ENCODE measurements at regions of chr5 and their contacts with region 1.

Region 1: DNA sequence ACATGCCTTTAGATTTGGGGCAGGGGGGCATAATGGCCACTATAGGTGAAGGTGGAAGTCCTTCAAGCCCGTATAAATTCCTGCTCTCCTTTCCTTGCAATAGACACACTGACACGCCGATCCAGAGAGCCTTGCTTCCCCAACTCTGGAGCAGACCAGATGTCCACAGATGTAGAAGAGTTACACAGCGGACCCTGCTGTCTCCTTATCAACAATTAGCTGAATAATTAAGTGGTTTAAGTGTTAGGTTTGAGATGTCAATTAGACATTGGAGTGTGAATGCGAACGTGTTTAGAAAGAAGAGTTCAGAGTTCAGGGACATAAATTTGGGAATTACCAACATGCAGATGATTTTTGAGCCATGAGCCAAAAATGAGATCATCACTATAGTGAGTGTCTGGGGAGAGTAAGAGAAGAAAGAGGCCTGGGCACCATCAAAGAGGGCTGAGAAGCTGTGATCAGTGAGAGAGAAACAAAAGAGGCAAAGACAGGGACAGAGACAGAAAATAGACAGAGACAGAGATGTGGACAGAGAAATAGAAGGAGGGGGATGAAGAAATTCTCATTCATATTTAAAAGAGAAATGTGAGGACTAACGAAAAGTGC is 734.4 kb upstream of the ADAMTS16 start:
- DNase-seq: no peak
- ATAC-seq: no peak
- H3K4me3 ChIP-seq: no peak overlapping the region
- H3K27ac ChIP-seq: no peak overlapping the region
- H3K4me1 ChIP-seq: no peaks in the 10 kb centered on the region
- H3K27me3 ChIP-seq: peaks cover 0 to 3% (median 0%) of the 10 kb centered on the region in 3 donors
- CTCF ChIP-seq: no peak

Region 2: GRCh38 chr5:4189317-4189716 is 216.4 kb before region 1 on chr5:
- intact Hi-C with region 1: no loop called
- DNase-seq: no peak
- ATAC-seq: no peak
- H3K4me3 ChIP-seq: no peak overlapping the region
- H3K27ac ChIP-seq: no peak overlapping the region
- H3K4me1 ChIP-seq: no peaks in the 10 kb centered on the region
- H3K27me3 ChIP-seq: no peaks in the 10 kb centered on the region
- CTCF ChIP-seq: no peak

Region 3: GRCh38 chr5:4374866-4375265 is 30.9 kb before region 1 on chr5:
- intact Hi-C with region 1: loop called in 1 of 2 experiments (anchors 2 kb)
- DNase-seq: no peak
- ATAC-seq: no peak
- H3K4me3 ChIP-seq: no peak overlapping the region
- H3K27ac ChIP-seq: no peak overlapping the region
- H3K4me1 ChIP-seq: no peaks in the 10 kb centered on the region
- H3K27me3 ChIP-seq: no peaks in the 10 kb centered on the region
- CTCF ChIP-seq: no peak